ENCODE measurements at regions of chr1 and their contacts with region 1.

Region 1: GRCh38 chr1:183318433-183318832 is 99.7 kb downstream of the NMNAT2 start:
- DNase-seq: peak; percentile 95
- H3K4me3 Mint-ChIP-seq: no peak overlapping the region
- H3K27ac Mint-ChIP-seq: peak overlapping the region; percentile 60
- H3K4me1 Mint-ChIP-seq: peaks cover 26% of the 10 kb centered on the region
- H3K27me3 Mint-ChIP-seq: no peaks in the 10 kb centered on the region
- CTCF ChIP-seq: peak; percentile 79

Region 2: DNA sequence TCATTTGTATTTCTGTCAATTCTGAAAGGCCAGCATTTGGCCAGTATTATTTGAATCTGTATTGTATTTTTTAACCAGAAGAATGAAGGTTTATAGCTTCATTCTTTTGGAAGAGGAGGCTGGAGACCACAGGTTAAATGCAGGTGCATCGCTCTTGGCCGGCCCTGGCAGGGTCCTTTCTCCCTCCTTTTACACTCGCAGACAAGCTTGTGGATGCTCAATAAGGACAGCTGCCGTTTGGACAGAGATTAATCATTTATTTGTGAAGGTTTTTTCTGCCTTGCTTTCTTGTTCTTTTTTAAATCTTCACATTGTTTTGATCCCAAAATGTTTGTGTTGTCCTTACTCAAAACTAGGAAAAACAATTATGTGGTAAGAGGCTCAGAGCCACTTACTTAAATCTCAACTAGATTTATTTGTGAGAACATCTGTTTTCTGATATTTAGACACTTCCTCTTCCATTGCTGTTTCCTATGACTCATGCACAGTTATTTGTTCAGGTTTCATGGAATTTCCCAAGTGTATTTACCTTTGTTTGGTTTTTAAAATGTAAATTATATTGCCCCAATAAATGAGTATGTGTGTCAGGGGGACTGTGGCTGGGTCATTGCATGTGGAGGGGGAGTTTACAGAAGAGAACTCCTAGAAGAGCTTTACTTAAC is 179.0 kb before region 1 on chr1:
- CTCF ChIA-PET with region 1: interaction called, 4 read pairs
- POLR2A ChIA-PET with region 1: interaction called, 4 read pairs
- intact Hi-C with region 1: loop called (anchors 1 kb)
- DNase-seq: peak; percentile 81
- H3K4me3 Mint-ChIP-seq: peak overlapping the region; percentile 1
- H3K27ac Mint-ChIP-seq: peak overlapping the region; percentile 99
- H3K4me1 Mint-ChIP-seq: peaks cover 27% of the 10 kb centered on the region
- H3K27me3 Mint-ChIP-seq: no peaks in the 10 kb centered on the region
- CTCF ChIP-seq: no peak

Region 3: DNA sequence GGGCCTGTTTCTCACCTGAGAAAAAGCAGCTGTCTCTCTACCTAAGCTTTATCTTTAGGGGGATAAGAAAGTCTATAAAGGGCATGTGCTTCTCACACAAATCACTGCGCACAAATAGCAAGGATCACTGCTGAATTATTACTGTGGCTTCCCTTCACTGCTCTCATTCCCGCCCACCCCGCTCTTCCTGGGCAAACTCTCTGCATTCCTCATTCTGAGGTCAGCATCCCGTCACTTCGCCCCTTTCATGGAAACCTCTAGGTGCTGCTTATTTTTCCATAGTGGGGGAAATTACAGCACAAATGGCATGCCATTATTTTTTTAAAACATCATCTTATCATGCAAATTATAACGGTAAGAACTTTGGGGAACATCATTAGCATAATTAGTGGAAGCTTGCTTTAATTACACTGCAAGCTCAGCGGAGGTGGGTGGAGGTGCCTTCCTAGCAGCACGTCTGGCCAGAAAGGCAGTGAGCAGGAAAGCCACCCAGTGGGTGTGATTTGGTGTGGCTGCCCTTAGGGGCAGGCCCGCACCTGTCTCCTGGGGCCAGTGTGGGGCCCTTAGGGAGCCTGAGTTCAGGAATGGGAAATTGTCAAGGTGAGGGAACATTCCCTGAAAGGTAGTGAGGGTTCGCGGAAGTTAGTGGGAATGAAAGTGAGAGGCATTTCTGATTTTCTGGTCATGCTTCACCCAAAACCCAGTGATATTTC is 26.5 kb before region 1 on chr1:
- CTCF ChIA-PET with region 1: interaction called, 12 read pairs
- POLR2A ChIA-PET with region 1: no interaction called
- intact Hi-C with region 1: no loop called
- DNase-seq: no peak
- H3K4me3 Mint-ChIP-seq: no peak overlapping the region
- H3K27ac Mint-ChIP-seq: no peak overlapping the region
- H3K4me1 Mint-ChIP-seq: peaks cover 9% of the 10 kb centered on the region
- H3K27me3 Mint-ChIP-seq: no peaks in the 10 kb centered on the region
- CTCF ChIP-seq: no peak

Region 4: GRCh38 chr1:183331091-183331742 is 12.8 kb after region 1 on chr1:
- CTCF ChIA-PET with region 1: interaction called, 17 read pairs
- POLR2A ChIA-PET with region 1: interaction called, 3 read pairs
- intact Hi-C with region 1: no loop called
- DNase-seq: no peak
- H3K4me3 Mint-ChIP-seq: no peak overlapping the region
- H3K27ac Mint-ChIP-seq: no peak overlapping the region
- H3K4me1 Mint-ChIP-seq: no peaks in the 10 kb centered on the region
- H3K27me3 Mint-ChIP-seq: peaks cover 33% of the 10 kb centered on the region
- CTCF ChIP-seq: no peak

Region 5: DNA sequence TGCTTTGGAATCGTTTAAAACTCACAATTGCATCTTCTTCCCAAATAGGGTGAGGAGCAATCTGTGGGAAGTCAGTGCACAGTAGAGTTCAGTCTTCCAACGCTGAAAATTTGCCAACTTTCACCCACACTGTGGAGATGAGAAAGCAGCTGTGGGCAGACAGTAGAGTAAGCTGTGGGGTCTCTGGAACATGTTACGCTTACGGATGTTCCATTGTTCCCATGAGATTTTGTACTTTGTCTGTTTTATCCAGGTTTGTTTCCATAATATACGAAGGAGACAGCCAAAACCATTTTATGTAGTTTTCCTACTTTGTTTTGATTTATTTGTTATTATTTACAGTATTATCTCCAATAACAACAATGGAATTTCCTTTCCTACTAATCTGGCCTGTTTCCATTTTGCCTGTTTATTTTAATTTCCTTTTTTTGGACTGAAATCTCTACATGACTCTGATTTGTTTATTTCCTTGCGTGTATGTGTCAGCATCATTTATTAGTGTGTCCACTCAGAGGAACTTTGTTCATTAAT is 421.4 kb after region 1 on chr1:
- CTCF ChIA-PET with region 1: no interaction called
- POLR2A ChIA-PET with region 1: no interaction called
- intact Hi-C with region 1: no loop called
- DNase-seq: no peak
- H3K4me3 Mint-ChIP-seq: no peak overlapping the region
- H3K27ac Mint-ChIP-seq: no peak overlapping the region
- H3K4me1 Mint-ChIP-seq: peaks cover 9% of the 10 kb centered on the region
- H3K27me3 Mint-ChIP-seq: no peaks in the 10 kb centered on the region
- CTCF ChIP-seq: no peak

Measured in MCF 10A (cell line).